Endothelial cell of umbilical vein (primary cell): ENCODE measurements at regions of chr9 and their contacts with region 1.

Region 1: DNA sequence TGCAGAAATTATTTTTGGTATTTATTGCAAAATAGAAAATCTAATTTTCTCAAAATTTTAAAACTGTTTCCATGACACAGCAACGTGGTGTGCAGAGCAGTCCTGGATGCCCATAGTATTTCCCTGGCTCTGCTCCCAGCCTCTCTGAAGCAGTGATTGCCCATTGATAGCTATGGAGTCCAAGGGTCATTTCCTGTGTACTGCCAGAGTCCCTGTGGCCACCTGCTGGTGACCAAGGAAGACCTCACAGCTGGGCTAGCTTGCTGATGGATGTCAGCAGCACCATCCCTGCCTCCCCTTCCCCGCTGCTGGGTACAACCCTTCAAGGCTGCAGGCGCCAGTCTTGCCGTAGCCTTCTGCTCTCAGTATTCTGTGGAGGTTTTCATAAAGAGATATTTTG is 184.1 kb downstream of the DIRAS2 start:
- DNase-seq: no peak
- H3K4me3 ChIP-seq: no peak overlapping the region
- H3K27ac ChIP-seq: no peak overlapping the region
- H3K4me1 ChIP-seq: no peaks in the 10 kb centered on the region
- H3K27me3 ChIP-seq: no peaks in the 10 kb centered on the region
- CTCF ChIP-seq: no peak
- POLR2A ChIP-seq: no peak

Region 2: GRCh38 chr9:90420768-90421513 is 37.5 kb before region 1 on chr9:
- CTCF ChIA-PET with region 1: no interaction called
- POLR2A ChIA-PET with region 1: no interaction called
- dilution Hi-C with region 1: no loop called
- intact Hi-C with region 1: no loop called
- DNase-seq: no peak
- H3K4me3 ChIP-seq: no peak overlapping the region
- H3K27ac ChIP-seq: no peak overlapping the region
- H3K4me1 ChIP-seq: no peaks in the 10 kb centered on the region
- H3K27me3 ChIP-seq: no peaks in the 10 kb centered on the region
- CTCF ChIP-seq: no peak
- POLR2A ChIP-seq: no peak

Region 3: GRCh38 chr9:90499761-90500160 is 41.3 kb after region 1 on chr9:
- CTCF ChIA-PET with region 1: no interaction called
- POLR2A ChIA-PET with region 1: no interaction called
- dilution Hi-C with region 1: no loop called
- intact Hi-C with region 1: loop called (anchors 1 kb)
- DNase-seq: no peak
- H3K4me3 ChIP-seq: no peak overlapping the region
- H3K27ac ChIP-seq: no peak overlapping the region
- H3K4me1 ChIP-seq: no peaks in the 10 kb centered on the region
- H3K27me3 ChIP-seq: no peaks in the 10 kb centered on the region
- CTCF ChIP-seq: no peak
- POLR2A ChIP-seq: no peak